ENCODE measurements at regions of chr1 and their contacts with region 1.

Region 1: DNA sequence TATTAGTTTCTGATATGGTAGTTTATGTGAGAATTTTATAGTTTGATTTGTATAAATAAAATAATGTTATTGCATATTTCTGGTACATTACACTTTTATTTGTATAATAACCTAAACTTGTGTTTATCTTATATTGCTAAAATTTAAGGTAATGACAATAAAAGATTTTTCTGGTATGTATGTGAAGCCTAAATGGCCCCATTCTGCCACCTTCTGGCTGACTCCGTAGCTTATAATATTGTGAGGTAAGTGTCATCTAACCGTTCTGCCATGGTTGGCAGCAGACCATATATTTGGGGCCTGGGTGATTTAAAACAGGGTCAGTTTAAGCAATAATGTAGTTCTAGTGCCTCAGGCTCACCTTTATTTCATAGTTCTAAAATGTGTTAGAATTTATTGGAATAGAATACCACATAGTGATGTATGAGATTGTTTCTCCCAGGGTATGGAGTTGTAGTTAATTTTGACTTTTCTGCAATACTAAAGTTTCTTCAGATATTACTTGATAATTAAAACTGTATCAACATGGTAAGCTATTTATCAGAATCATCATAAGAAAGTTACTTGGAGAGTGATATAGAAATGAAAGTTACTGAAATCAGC is 21.2 kb upstream of the PRKACB start:
- DNase-seq: peak; percentile 20
- H3K4me3 ChIP-seq: no peak overlapping the region
- H3K27ac ChIP-seq: no peak overlapping the region
- H3K4me1 ChIP-seq: peaks cover 3% of the 10 kb centered on the region
- H3K27me3 ChIP-seq: no peaks in the 10 kb centered on the region
- CTCF ChIP-seq: peak; percentile 60 to 76

Region 2: GRCh38 chr1:83905315-83905907 is 217.5 kb before region 1 on chr1:
- CTCF ChIA-PET with region 1: no interaction called
- dilution Hi-C with region 1: no loop called
- in situ Hi-C with region 1: no loop called
- intact Hi-C with region 1: loop called (anchors 2 kb)
- DNase-seq: no peak
- H3K4me3 ChIP-seq: no peak overlapping the region
- H3K27ac ChIP-seq: no peak overlapping the region
- H3K4me1 ChIP-seq: peaks cover 20% of the 10 kb centered on the region
- H3K27me3 ChIP-seq: no peaks in the 10 kb centered on the region
- CTCF ChIP-seq: peak; percentile 42 to 61

Region 3: GRCh38 chr1:83990749-83991148 is 132.1 kb before region 1 on chr1:
- CTCF ChIA-PET with region 1: no interaction called
- dilution Hi-C with region 1: no loop called
- in situ Hi-C with region 1: no loop called
- intact Hi-C with region 1: loop called (anchors 1 kb)
- DNase-seq: no peak
- H3K4me3 ChIP-seq: no peak overlapping the region
- H3K27ac ChIP-seq: no peak overlapping the region
- H3K4me1 ChIP-seq: no peaks in the 10 kb centered on the region
- H3K27me3 ChIP-seq: no peaks in the 10 kb centered on the region
- CTCF ChIP-seq: peak in 1 of 2 donors; percentile 37